ENCODE measurements at regions of chr20 and their contacts with region 1.

Region 1: DNA sequence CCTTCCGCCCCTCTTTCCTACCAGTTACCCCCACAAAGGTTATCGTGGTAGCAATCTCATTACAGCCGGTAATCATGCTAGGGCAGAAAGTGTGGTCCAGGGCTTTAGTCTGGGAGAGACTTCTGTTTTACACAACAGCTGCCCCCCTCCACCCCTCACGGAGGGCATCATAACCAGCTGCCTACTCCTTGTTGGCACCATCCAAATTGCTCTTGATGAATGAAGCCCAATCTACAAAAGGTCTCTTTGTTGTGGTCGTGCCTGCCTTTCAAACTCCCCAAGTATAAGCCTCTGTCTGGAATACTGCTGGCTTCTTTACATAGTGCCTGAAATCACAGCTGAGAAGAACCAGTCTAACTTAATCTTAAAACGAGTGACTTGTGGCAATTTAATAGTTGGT is 157.9 kb downstream of the INSM1 start:
- DNase-seq: peak in 39 of 42 donors; percentile 23 to 77 (median 52)

Region 2: GRCh38 chr20:20489648-20490341 is 36.0 kb before region 1 on chr20:
- intact Hi-C with region 1: loop called (anchors 5 kb)
- DNase-seq: no peak

Measured in head of caudate nucleus (tissue), 42 donors.